Activated CD8-positive, alpha-beta T cell treated with anti-CD3 and anti-CD28 coated beads for 36 hours (primary cell): ENCODE measurements at regions of chr11 and their contacts with region 1.

Region 1: GRCh38 chr11:61111786-61112517 is 9.7 kb downstream of the CD5 start:
- DNase-seq: peak; percentile 87
- ATAC-seq: peak; percentile 91
- H3K4me3 Mint-ChIP-seq: peak overlapping the region; percentile 68
- H3K27ac Mint-ChIP-seq: peak overlapping the region; percentile 85
- H3K4me1 Mint-ChIP-seq: peaks cover 95% of the 10 kb centered on the region
- H3K27me3 Mint-ChIP-seq: no peaks in the 10 kb centered on the region
- CTCF ChIP-seq: no peak

Region 2: DNA sequence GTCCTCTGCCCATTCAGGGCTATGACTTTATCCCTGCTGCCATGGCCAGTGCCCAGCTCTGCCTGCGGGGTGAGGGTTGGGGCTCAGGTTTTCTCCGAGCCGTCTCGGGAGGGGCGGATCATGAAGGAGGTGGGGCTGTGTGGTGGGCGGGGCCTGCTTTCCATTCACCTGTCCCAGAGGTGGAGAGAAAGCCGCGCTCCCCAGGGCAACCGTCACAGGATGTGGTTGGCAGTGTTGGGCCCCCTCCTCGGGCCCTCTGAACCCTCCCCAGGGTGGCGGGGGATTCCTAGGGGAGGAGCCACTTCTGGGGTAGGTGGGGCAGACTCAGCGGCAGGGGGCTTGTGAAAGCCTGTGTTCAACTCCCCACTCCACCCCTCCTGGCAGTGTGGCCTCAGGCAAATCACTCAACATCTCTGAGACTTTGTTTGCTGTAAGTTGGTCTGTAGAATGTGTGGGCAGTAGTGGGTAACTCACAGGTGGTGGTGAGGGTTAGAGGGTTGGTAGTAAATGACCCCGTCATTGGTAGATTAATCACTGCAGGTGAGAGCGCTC is 90.2 kb before region 1 on chr11:
- CTCF ChIA-PET with region 1: interaction called, 3 read pairs
- POLR2A ChIA-PET with region 1: interaction called, 27 read pairs
- intact Hi-C with region 1: loop called (anchors 5 kb)
- DNase-seq: peak; percentile 92
- ATAC-seq: peak; percentile 63
- H3K4me3 Mint-ChIP-seq: peak overlapping the region; percentile 64
- H3K27ac Mint-ChIP-seq: peak overlapping the region; percentile 88
- H3K4me1 Mint-ChIP-seq: peaks cover 81% of the 10 kb centered on the region
- H3K27me3 Mint-ChIP-seq: no peaks in the 10 kb centered on the region
- CTCF ChIP-seq: no peak

Region 3: GRCh38 chr11:61061081-61061826 is 50.7 kb before region 1 on chr11:
- CTCF ChIA-PET with region 1: interaction called, 8 read pairs
- POLR2A ChIA-PET with region 1: interaction called, 21 read pairs
- intact Hi-C with region 1: loop called (anchors 5 kb)
- DNase-seq: peak; percentile 94
- ATAC-seq: peak; percentile 80
- H3K4me3 Mint-ChIP-seq: peak overlapping the region; percentile 62
- H3K27ac Mint-ChIP-seq: peak overlapping the region; percentile 91
- H3K4me1 Mint-ChIP-seq: peaks cover 72% of the 10 kb centered on the region
- H3K27me3 Mint-ChIP-seq: no peaks in the 10 kb centered on the region
- CTCF ChIP-seq: no peak

Region 4: GRCh38 chr11:61083601-61084147 is 28.3 kb before region 1 on chr11:
- CTCF ChIA-PET with region 1: interaction called, 20 read pairs
- POLR2A ChIA-PET with region 1: interaction called, 9 read pairs
- intact Hi-C with region 1: no loop called
- DNase-seq: peak; percentile 83
- ATAC-seq: peak; percentile 70
- H3K4me3 Mint-ChIP-seq: peak overlapping the region; percentile 78
- H3K27ac Mint-ChIP-seq: peak overlapping the region; percentile 88
- H3K4me1 Mint-ChIP-seq: peaks cover 65% of the 10 kb centered on the region
- H3K27me3 Mint-ChIP-seq: no peaks in the 10 kb centered on the region
- CTCF ChIP-seq: no peak

Region 5: GRCh38 chr11:61129639-61130523 is 17.9 kb after region 1 on chr11:
- CTCF ChIA-PET with region 1: interaction called, 24 read pairs
- POLR2A ChIA-PET with region 1: interaction called, 65 read pairs
- intact Hi-C with region 1: no loop called
- DNase-seq: peak; percentile 95
- ATAC-seq: peak; percentile 92
- H3K4me3 Mint-ChIP-seq: peak overlapping the region; percentile 29
- H3K27ac Mint-ChIP-seq: peak overlapping the region; percentile 11
- H3K4me1 Mint-ChIP-seq: peaks cover 15% of the 10 kb centered on the region
- H3K27me3 Mint-ChIP-seq: no peaks in the 10 kb centered on the region
- CTCF ChIP-seq: peak; percentile 100